BJ (cell line): ENCODE measurements at regions of chr4 and their contacts with region 1.

Region 1: DNA sequence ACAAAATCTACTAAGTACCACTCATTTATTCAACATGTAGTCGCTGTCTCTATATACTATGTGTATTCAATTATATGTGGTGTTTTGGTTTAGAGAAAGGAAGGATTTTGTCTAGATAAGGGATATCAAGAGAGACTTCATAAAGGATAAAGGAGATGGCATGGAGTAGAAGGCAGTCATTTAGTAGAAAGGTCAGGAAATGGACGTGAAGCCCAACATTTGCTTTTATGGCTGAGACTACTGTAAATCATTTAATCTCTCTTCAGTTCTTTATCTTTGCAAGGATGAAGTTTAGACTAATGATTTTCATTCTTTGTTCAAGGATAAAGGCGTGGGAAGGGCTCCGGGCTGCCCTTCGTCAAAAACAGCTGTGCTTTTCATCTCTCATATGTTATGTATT is 25.2 kb downstream of the IL2 start:
- DNase-seq: no peak
- H3K4me3 ChIP-seq: no peak overlapping the region
- H3K27me3 ChIP-seq: no peaks in the 10 kb centered on the region
- CTCF ChIP-seq: no peak

Region 2: DNA sequence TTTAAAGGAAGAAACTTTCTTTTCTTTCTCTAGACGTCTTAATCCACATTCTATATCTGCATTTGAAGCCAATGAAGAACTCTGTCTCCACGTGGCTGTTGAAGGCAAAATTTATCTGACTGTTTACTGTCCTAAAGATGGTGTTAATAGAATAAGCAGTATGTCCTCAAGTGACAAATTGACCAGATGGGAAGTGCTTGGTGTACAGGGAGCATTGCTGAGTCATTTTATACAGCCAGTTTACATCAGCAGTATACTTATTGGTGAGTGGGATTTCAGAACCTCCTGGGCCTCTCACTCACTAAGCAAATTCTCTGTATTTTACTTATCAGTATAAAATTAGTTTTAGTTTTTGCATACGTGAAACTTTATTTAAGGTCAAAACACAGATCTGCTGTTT is 18.8 kb before region 1 on chr4:
- CTCF ChIA-PET with region 1: no interaction called
- POLR2A ChIA-PET with region 1: interaction called, 11 read pairs
- DNase-seq: peak; percentile 1
- H3K4me3 ChIP-seq: no peak overlapping the region
- H3K27me3 ChIP-seq: no peaks in the 10 kb centered on the region
- CTCF ChIP-seq: no peak